ENCODE measurements at regions of chr3 and their contacts with region 1.

Region 1: GRCh38 chr3:134473868-134474546 is 11.8 kb downstream of the ANAPC13 start:
- DNase-seq: peak; percentile 67 to 80 (median 72)
- H3K4me3 ChIP-seq: no peak overlapping the region
- H3K4me3 Mint-ChIP-seq: no peak overlapping the region
- H3K27ac ChIP-seq: no peak overlapping the region
- H3K27ac Mint-ChIP-seq: peak overlapping the region in 2 of 7 donors; percentile 8 to 80
- H3K4me1 ChIP-seq: no peaks in the 10 kb centered on the region
- H3K4me1 Mint-ChIP-seq: peaks cover 0 to 5% (median 3%) of the 10 kb centered on the region in 4 donors
- H3K27me3 ChIP-seq: no peaks in the 10 kb centered on the region
- H3K27me3 Mint-ChIP-seq: no peaks in the 10 kb centered on the region

Region 2: GRCh38 chr3:134197681-134198261 is 276.2 kb before region 1 on chr3:
- CTCF ChIA-PET with region 1: interaction called, 28 read pairs
- POLR2A ChIA-PET with region 1: no interaction called
- intact Hi-C with region 1: loop called (anchors 1 kb)
- DNase-seq: peak in 4 of 5 donors; percentile 39 to 49 (median 44)
- H3K4me3 ChIP-seq: no peak overlapping the region
- H3K4me3 Mint-ChIP-seq: no peak overlapping the region
- H3K27ac ChIP-seq: no peak overlapping the region
- H3K27ac Mint-ChIP-seq: no peak overlapping the region
- H3K4me1 ChIP-seq: no peaks in the 10 kb centered on the region
- H3K4me1 Mint-ChIP-seq: peaks cover 0 to 6% (median 1%) of the 10 kb centered on the region in 4 donors
- H3K27me3 ChIP-seq: no peaks in the 10 kb centered on the region
- H3K27me3 Mint-ChIP-seq: no peaks in the 10 kb centered on the region

Region 3: DNA sequence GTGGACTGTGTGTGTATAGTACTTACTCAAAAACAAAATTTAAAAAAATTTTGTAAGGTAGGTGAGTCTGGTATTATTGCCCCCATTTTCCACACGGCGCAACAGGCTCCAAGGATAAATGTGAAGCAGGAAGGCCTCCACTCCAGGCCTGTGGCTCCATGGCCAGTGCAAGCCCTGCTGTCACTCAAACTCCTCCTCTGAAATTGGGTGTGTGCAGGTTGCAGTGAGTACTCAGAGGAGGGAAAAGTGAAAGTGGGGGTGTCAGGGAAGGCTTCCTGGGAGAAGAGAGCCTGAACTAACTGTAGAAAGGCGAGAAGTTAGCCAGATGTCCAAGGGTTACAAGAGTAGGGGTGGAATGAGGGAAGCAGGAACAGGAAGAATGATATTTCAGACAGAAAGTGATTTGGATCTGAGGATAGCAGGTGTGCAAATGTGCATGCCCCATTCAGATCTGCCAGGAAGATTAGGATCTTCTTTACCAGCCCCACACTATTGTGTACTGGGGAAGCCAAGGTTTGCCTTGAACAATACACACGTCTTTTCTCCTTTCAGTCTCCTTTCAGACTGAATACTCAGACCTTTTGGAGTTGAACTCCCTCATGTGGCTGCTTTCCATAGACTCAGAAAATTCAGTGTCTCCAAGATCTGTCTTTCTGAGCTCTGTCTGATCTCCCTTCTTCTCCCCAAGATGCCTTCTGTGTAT is 174.7 kb before region 1 on chr3:
- CTCF ChIA-PET with region 1: interaction called, 10 read pairs
- POLR2A ChIA-PET with region 1: no interaction called
- intact Hi-C with region 1: no loop called
- DNase-seq: no peak
- H3K4me3 ChIP-seq: no peak overlapping the region
- H3K4me3 Mint-ChIP-seq: no peak overlapping the region
- H3K27ac ChIP-seq: no peak overlapping the region
- H3K27ac Mint-ChIP-seq: no peak overlapping the region
- H3K4me1 ChIP-seq: peaks cover 10% of the 10 kb centered on the region
- H3K4me1 Mint-ChIP-seq: no peaks in the 10 kb centered on the region
- H3K27me3 ChIP-seq: no peaks in the 10 kb centered on the region
- H3K27me3 Mint-ChIP-seq: peaks cover 0 to 6% of the 10 kb centered on the region in 2 donors

Region 4: GRCh38 chr3:134308350-134308891 is 165.6 kb before region 1 on chr3:
- CTCF ChIA-PET with region 1: interaction called, 132 read pairs
- POLR2A ChIA-PET with region 1: interaction called, 4 read pairs
- intact Hi-C with region 1: loop called (anchors 1 kb)
- DNase-seq: peak; percentile 68 to 74 (median 71)
- H3K4me3 ChIP-seq: no peak overlapping the region
- H3K4me3 Mint-ChIP-seq: peak overlapping the region in 4 of 8 donors; percentile 3 to 70 (median 67)
- H3K27ac ChIP-seq: no peak overlapping the region
- H3K27ac Mint-ChIP-seq: no peak overlapping the region
- H3K4me1 ChIP-seq: peaks cover under 1% of the 10 kb centered on the region
- H3K4me1 Mint-ChIP-seq: peaks cover 2 to 7% (median 3%) of the 10 kb centered on the region in 4 donors
- H3K27me3 ChIP-seq: peaks cover 5% of the 10 kb centered on the region
- H3K27me3 Mint-ChIP-seq: peaks cover 21% of the 10 kb centered on the region in 2 donors

Region 5: GRCh38 chr3:134364061-134364935 is 109.7 kb before region 1 on chr3:
- CTCF ChIA-PET with region 1: interaction called, 8 read pairs
- POLR2A ChIA-PET with region 1: no interaction called
- intact Hi-C with region 1: loop called (anchors 10 kb)
- DNase-seq: peak in 1 of 5 donors; percentile 8
- H3K4me3 ChIP-seq: peak overlapping the region; percentile 29 to 43
- H3K4me3 Mint-ChIP-seq: peak overlapping the region; percentile 73 to 90 (median 81)
- H3K27ac ChIP-seq: no peak overlapping the region
- H3K27ac Mint-ChIP-seq: peak overlapping the region in 6 of 7 donors; percentile 41 to 85 (median 61)
- H3K4me1 ChIP-seq: peaks cover 27% of the 10 kb centered on the region
- H3K4me1 Mint-ChIP-seq: peaks cover 18 to 30% (median 24%) of the 10 kb centered on the region in 4 donors
- H3K27me3 ChIP-seq: no peaks in the 10 kb centered on the region
- H3K27me3 Mint-ChIP-seq: no peaks in the 10 kb centered on the region

Region 6: GRCh38 chr3:134517791-134518190 is 43.8 kb after region 1 on chr3:
- CTCF ChIA-PET with region 1: no interaction called
- POLR2A ChIA-PET with region 1: no interaction called
- intact Hi-C with region 1: no loop called
- DNase-seq: no peak
- H3K4me3 ChIP-seq: no peak overlapping the region
- H3K4me3 Mint-ChIP-seq: peak overlapping the region in 1 of 8 donors; percentile 52
- H3K27ac ChIP-seq: no peak overlapping the region
- H3K27ac Mint-ChIP-seq: peak overlapping the region in 1 of 7 donors; percentile 18
- H3K4me1 ChIP-seq: no peaks in the 10 kb centered on the region
- H3K4me1 Mint-ChIP-seq: peaks cover 4 to 12% (median 8%) of the 10 kb centered on the region in 4 donors
- H3K27me3 ChIP-seq: no peaks in the 10 kb centered on the region
- H3K27me3 Mint-ChIP-seq: no peaks in the 10 kb centered on the region